IMR-90 (cell line): ENCODE measurements at regions of chr2 and their contacts with region 1.

Region 1: GRCh38 chr2:227415538-227416424 is 28.0 kb upstream of the SCYGR1 start:
- DNase-seq: peak; percentile 69
- ATAC-seq: peak; percentile 70
- H3K4me3 ChIP-seq: no peak overlapping the region
- H3K27ac ChIP-seq: peak overlapping the region; percentile 95
- H3K4me1 ChIP-seq: peaks cover 4% of the 10 kb centered on the region
- H3K27me3 ChIP-seq: no peaks in the 10 kb centered on the region
- CTCF ChIP-seq: no peak
- POLR2A ChIP-seq: no peak
- RAD21 ChIP-seq: no peak

Region 2: DNA sequence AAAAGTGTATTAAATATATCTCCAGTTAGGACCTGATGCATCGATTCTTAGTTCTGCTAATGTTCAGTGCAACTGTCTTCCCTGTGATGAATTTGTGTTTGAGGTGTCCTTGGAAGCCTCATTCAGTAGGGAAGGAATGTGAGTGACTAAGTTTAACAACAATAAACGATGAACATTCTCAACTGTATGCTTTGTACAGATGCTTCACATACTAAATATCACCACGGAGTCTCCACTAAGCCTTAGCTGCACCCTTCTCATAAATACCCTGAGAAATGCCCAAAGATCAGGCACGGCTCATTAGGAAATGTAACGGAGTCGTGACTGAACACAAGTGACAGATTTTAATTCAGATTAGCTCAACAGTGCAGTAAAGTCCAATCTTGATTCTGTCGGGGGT is 31.8 kb after region 1 on chr2:
- CTCF ChIA-PET with region 1: no interaction called
- POLR2A ChIA-PET with region 1: interaction called, 3 read pairs
- dilution Hi-C with region 1: no loop called
- in situ Hi-C with region 1: no loop called
- intact Hi-C with region 1: loop called (anchors 2 kb)
- DNase-seq: peak; percentile 88
- ATAC-seq: peak; percentile 98
- H3K4me3 ChIP-seq: no peak overlapping the region
- H3K27ac ChIP-seq: peak overlapping the region; percentile 64
- H3K4me1 ChIP-seq: peaks cover 12% of the 10 kb centered on the region
- H3K27me3 ChIP-seq: no peaks in the 10 kb centered on the region
- CTCF ChIP-seq: no peak
- POLR2A ChIP-seq: no peak
- RAD21 ChIP-seq: no peak